ENCODE measurements at regions of chr17 and their contacts with region 1.

Region 1: DNA sequence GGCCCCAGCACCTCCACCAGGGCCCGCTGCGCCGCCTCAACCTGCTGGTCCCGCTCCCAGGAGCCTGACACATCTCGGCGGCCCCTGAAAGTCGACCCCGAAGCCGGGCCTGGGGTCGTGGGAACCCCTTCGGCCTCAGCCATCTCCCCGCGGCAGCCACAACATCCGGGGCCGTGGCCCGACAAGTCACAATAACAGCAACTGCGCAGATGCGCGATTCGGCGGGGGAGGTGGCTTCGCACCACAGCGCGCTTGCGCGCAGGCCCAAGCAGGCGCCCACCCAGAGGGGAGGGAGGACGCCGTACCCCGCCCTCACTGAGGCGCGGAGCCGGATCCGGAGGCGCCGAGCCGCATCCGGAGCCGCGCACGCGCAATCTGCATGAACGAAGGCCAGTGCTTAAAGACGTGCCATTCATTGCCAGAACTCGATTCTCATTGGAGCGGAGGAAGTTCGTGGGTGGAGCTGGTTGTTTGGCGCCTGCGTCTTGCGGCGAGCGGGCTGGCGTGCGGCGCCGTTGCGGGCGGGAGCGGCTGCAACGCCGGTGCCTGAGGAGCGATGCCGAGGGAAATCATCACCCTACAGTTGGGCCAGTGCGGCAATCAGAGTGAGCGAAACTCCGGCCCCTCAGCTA is at the starts of genes RETREG3 and TUBG1:
- DNase-seq: peak; percentile 99
- H3K4me3 Mint-ChIP-seq: peak within 1 kb of the TSS; percentile 99
- H3K27ac Mint-ChIP-seq: peak within 1 kb of the TSS; percentile 91
- H3K4me1 Mint-ChIP-seq: peaks cover 42% of the 10 kb centered on the region
- H3K27me3 Mint-ChIP-seq: no peaks in the 10 kb centered on the region
- total RNA-seq, gene RETREG3: 73.9 to 75.5 TPM
- total RNA-seq, gene TUBG1: 53.3 to 56.3 TPM

Region 2: GRCh38 chr17:42428141-42428944 is 181.0 kb before region 1 on chr17:
- CTCF ChIA-PET with region 1: no interaction called
- POLR2A ChIA-PET with region 1: no interaction called
- DNase-seq: peak; percentile 38
- H3K4me3 Mint-ChIP-seq: no peak overlapping the region
- H3K27ac Mint-ChIP-seq: no peak overlapping the region
- H3K4me1 Mint-ChIP-seq: peaks cover 1% of the 10 kb centered on the region
- H3K27me3 Mint-ChIP-seq: peaks cover 45% of the 10 kb centered on the region

Region 3: GRCh38 chr17:42566883-42567573 is 42.3 kb before region 1 on chr17 and contains the start of gene MLX:
- CTCF ChIA-PET with region 1: interaction called, 5 read pairs
- POLR2A ChIA-PET with region 1: interaction called, 20 read pairs
- DNase-seq: peak; percentile 93
- H3K4me3 Mint-ChIP-seq: peak within 1 kb of the TSS; percentile 92
- H3K27ac Mint-ChIP-seq: peak within 1 kb of the TSS; percentile 93
- H3K4me1 Mint-ChIP-seq: peaks cover 59% of the 10 kb centered on the region
- H3K27me3 Mint-ChIP-seq: no peaks in the 10 kb centered on the region
- total RNA-seq, gene MLX: 52.2 to 53.8 TPM

Region 4: DNA sequence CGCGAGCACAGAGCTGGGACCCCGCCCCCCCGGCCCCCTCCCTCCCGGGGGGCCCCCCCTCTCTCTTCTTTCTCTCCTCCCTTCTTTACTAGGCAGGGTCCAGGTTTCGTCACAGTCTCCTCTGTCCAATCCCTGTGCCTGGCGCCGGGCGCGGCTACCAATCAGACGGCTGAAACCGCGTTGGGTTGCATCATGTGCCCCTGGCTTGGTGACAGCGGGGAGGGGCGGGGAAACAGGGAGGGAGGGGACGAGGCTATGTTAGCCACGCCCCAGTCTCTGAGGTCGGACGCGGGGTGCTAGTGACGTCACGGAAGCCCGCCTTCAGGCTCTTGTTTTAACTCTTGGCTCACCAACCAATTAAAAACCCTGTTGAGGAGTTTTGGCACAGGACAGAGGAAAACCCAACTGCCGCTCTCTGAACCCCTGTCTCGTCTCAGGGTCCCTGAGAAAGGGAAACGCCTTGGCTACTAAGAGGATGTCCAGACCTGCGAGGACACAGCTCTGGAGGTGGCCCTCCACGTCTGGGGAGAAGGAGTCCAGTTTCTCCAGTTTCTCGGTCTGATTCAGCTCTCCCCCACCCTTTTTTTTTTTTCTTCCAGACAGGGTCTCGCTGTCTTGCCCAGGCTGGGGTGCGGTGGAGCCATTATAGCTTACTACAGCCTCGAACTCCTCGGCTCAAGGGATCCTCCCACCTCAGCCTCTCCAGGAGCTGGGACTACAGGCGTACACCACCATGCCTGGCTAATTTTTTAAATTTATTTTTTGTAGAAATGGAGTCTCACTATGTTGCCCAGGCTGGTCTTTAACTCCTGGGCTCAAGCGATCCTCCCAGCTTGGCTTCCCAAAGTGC is 67.9 kb after region 1 on chr17:
- CTCF ChIA-PET with region 1: interaction called, 14 read pairs
- POLR2A ChIA-PET with region 1: interaction called, 36 read pairs
- DNase-seq: peak; percentile 100
- H3K4me3 Mint-ChIP-seq: peak overlapping the region; percentile 77
- H3K27ac Mint-ChIP-seq: peak overlapping the region; percentile 77
- H3K4me1 Mint-ChIP-seq: peaks cover 50% of the 10 kb centered on the region
- H3K27me3 Mint-ChIP-seq: peaks cover 47% of the 10 kb centered on the region

Measured in activated CD4-positive, alpha-beta memory T cell treated with anti-CD3 and anti-CD28 coated beads, Interleukin-2, amount 10 ng/mL, durations not matched to agents 7 days and 5 days (primary cell).